ENCODE measurements at regions of chr11 and their contacts with region 1.

Region 1: GRCh38 chr11:102237096-102237735 is 80.1 kb upstream of the BIRC3 start:
- DNase-seq: no peak
- ATAC-seq: no peak
- H3K4me3 ChIP-seq: no peak overlapping the region
- H3K27ac ChIP-seq: peak overlapping the region in 1 of 2 donors; percentile 28
- H3K4me1 ChIP-seq: peaks cover 0 to 2% of the 10 kb centered on the region in 2 donors
- H3K27me3 ChIP-seq: no peaks in the 10 kb centered on the region

Region 2: DNA sequence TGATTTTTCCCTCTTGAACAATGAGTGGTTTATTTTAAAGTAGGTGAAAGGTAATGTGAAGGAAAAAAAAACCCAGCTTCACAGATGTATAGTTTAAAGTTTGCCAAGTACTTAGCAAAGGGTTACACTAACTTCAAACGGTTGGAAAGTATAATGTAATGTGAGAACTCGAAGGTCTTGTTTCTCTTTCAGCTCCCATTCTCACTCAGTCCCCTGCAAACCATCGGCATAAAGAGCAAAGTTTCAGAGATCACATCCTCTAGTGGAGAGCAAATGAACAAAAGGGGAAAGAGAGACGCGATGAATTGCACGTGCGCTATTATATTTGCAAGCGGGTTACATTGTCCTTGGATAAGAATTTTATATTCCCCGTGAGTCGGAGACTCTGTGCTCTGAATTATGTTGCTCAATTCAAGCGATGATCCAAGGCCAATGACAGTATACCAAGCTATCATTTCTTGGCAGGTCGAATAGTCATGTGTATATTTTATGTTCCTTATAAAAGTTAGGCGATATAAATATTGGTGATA is 42.5 kb after region 1 on chr11:
- intact Hi-C with region 1: loop called in 1 of 2 experiments (anchors 5 kb)
- DNase-seq: no peak
- ATAC-seq: peak; percentile 54
- H3K4me3 ChIP-seq: no peak overlapping the region
- H3K27ac ChIP-seq: peak overlapping the region in 1 of 2 donors; percentile 28
- H3K4me1 ChIP-seq: peaks cover 0 to 3% of the 10 kb centered on the region in 2 donors
- H3K27me3 ChIP-seq: no peaks in the 10 kb centered on the region

Measured in aorta (tissue), 5 donors.